Activated T-helper 2 cell treated with anti-CD3 and anti-CD28 coated beads, Interferon-gamma antibody, Interleukin-2, Interleukin-4, amounts not matched to agents 10 μg/mL and 5 μg/mL and 100 μg/mL, durations not matched to agents 14 hours and 24 hours and 36 hours (primary cell): ENCODE measurements at regions of chr10 and their contacts with region 1.

Region 1: GRCh38 chr10:24826019-24826418 is 102.3 kb upstream of the ARHGAP21 start:
- DNase-seq: no peak
- H3K4me3 Mint-ChIP-seq: peak overlapping the region; percentile 31
- H3K27ac Mint-ChIP-seq: peak overlapping the region; percentile 33
- H3K4me1 Mint-ChIP-seq: peaks cover 35% of the 10 kb centered on the region
- H3K27me3 Mint-ChIP-seq: peaks cover 38% of the 10 kb centered on the region

Region 2: GRCh38 chr10:24642622-24643417 is 183.2 kb before region 1 on chr10:
- intact Hi-C with region 1: loop called (anchors 5 kb)
- DNase-seq: no peak
- H3K4me3 Mint-ChIP-seq: no peak overlapping the region
- H3K27ac Mint-ChIP-seq: no peak overlapping the region
- H3K4me1 Mint-ChIP-seq: peaks cover 6% of the 10 kb centered on the region
- H3K27me3 Mint-ChIP-seq: no peaks in the 10 kb centered on the region

Region 3: DNA sequence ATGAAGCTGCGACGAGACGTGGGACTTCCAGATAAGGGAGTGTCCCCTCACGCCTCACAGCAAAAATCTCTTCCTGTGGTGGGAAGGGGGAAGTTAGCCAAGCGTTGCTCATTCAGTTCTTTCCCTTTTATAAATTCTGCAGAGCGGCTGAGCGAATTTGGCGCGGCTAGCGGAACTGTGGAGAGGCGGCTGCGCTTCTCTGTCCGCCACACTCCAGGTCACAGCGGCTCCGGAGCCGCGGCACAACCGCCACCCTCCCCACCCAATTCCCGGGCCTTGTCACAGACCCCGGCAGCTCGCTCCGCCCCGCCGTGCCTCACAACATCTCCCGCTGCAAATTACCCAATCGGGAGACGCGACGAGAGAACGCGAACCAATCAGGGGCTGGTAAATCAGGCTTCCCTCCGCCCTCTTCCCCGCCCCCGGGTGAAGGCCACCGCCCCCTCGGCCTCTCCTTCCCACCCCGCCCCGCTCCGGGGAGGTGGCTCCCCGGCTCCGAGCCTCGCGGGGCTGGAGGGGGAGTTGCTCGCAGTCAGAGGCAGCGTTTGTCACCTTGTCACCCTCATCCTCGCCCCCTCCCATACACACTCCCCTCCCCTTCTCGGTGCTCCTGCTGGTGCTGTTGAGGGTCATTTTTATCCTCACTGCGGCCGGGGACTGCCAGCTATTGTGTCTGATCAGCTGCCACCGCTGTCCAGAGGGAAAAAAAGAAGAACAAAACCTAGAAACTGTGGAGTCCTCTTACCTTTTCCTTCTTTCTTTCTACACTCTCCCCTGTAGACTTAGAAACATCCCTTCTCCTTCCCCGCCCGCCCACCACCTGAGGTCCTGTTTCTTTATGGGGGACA is 101.4 kb before region 1 on chr10:
- intact Hi-C with region 1: loop called (anchors 1 kb)
- DNase-seq: peak; percentile 92
- H3K4me3 Mint-ChIP-seq: peak overlapping the region; percentile 86
- H3K27ac Mint-ChIP-seq: peak overlapping the region; percentile 87
- H3K4me1 Mint-ChIP-seq: peaks cover 19% of the 10 kb centered on the region
- H3K27me3 Mint-ChIP-seq: peaks cover 4% of the 10 kb centered on the region

Region 4: DNA sequence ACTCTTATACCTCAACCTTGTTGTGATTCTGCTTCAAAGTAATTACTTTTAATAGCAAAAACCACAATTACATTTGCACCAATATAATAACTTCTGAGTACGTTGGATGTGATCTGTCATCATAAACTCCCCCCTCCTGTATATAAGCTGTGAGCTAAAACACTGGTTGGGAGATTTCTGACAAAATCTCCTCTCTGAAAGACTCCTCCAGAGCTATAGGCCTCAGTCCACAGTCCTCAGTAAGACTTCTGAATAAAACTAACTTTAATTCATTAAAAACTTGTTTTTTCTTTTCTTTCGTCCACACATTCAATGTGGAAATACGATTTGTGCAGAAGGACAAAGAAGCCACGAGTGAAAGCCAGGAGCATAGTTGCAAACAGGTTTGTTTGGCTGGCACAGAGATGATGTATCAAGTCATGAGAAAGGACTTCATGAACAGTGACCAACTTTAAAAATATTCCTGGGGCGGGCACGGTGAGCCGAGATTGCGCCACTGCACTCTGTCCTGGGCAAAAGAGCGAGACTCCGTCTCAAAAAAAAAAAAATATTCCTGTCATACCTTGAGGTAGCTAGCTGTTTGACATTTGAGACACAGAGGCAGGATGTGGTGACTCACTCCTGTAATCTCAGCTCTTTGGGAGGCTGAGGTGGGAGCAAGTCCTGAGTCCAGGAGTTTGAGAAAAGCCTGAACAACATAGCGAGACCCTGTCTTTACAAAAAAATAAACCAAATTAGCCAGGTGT is 11.3 kb before region 1 on chr10:
- intact Hi-C with region 1: no loop called
- DNase-seq: no peak
- H3K4me3 Mint-ChIP-seq: no peak overlapping the region
- H3K27ac Mint-ChIP-seq: no peak overlapping the region
- H3K4me1 Mint-ChIP-seq: peaks cover 2% of the 10 kb centered on the region
- H3K27me3 Mint-ChIP-seq: peaks cover 13% of the 10 kb centered on the region

Region 5: GRCh38 chr10:24901686-24902399 is 75.8 kb after region 1 on chr10:
- intact Hi-C with region 1: loop called (anchors 5 kb)
- DNase-seq: no peak
- H3K4me3 Mint-ChIP-seq: no peak overlapping the region
- H3K27ac Mint-ChIP-seq: peak overlapping the region; percentile 57
- H3K4me1 Mint-ChIP-seq: peaks cover 36% of the 10 kb centered on the region
- H3K27me3 Mint-ChIP-seq: no peaks in the 10 kb centered on the region

Region 6: GRCh38 chr10:24952707-24953645 is 127.0 kb after region 1 on chr10:
- intact Hi-C with region 1: loop called (anchors 2 kb)
- DNase-seq: peak; percentile 15
- H3K4me3 Mint-ChIP-seq: peak overlapping the region; percentile 64
- H3K27ac Mint-ChIP-seq: peak overlapping the region; percentile 29
- H3K4me1 Mint-ChIP-seq: peaks cover 9% of the 10 kb centered on the region
- H3K27me3 Mint-ChIP-seq: peaks cover 10% of the 10 kb centered on the region